ENCODE measurements at regions of chr3 and their contacts with region 1.

Region 1: DNA sequence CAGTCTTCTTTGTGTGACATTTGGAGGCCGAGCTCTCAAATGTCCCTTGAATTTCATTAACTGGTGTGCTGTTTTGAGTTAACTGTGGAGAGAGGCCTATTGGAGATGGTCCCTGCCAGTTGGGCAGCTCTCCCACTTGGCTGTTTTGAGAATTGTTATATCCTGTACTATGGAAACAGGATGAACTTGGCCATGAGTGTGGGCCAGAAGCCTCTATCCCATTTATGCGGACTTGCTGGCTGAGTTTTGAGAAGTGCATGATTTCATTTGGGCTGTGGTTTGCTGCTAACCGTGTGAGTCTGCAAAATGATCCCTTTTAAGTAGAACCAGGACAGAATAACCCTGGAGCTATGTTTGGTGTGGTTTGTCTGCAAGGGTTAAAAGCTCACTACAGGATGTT is 366.0 kb downstream of the PTPRG start:
- DNase-seq: peak in 1 of 2 donors; percentile 77
- H3K4me3 ChIP-seq: no peak overlapping the region
- H3K27ac ChIP-seq: peak overlapping the region; percentile 70 to 72
- H3K4me1 ChIP-seq: peaks cover 0 to 49% of the 10 kb centered on the region in 2 donors
- H3K27me3 ChIP-seq: no peaks in the 10 kb centered on the region
- CTCF ChIP-seq: no peak

Region 2: GRCh38 chr3:61847784-61848462 is 79.4 kb before region 1 on chr3:
- intact Hi-C with region 1: loop called (anchors 5 kb)
- DNase-seq: peak in 1 of 2 donors; percentile 83
- H3K4me3 ChIP-seq: peak overlapping the region in 1 of 2 donors; percentile 3
- H3K27ac ChIP-seq: peak overlapping the region; percentile 72 to 85
- H3K4me1 ChIP-seq: peaks cover 7 to 47% of the 10 kb centered on the region in 2 donors
- H3K27me3 ChIP-seq: no peaks in the 10 kb centered on the region
- CTCF ChIP-seq: no peak

Region 3: GRCh38 chr3:61861410-61861809 is 65.9 kb before region 1 on chr3:
- intact Hi-C with region 1: no loop called
- DNase-seq: no peak
- H3K4me3 ChIP-seq: no peak overlapping the region
- H3K27ac ChIP-seq: no peak overlapping the region
- H3K4me1 ChIP-seq: peaks cover 0 to 29% of the 10 kb centered on the region in 2 donors
- H3K27me3 ChIP-seq: no peaks in the 10 kb centered on the region
- CTCF ChIP-seq: no peak

Region 4: GRCh38 chr3:61872077-61872706 is 55.1 kb before region 1 on chr3:
- intact Hi-C with region 1: loop called (anchors 5 kb)
- DNase-seq: no peak
- H3K4me3 ChIP-seq: no peak overlapping the region
- H3K27ac ChIP-seq: peak overlapping the region; percentile 50 to 53
- H3K4me1 ChIP-seq: peaks cover 0 to 51% of the 10 kb centered on the region in 2 donors
- H3K27me3 ChIP-seq: no peaks in the 10 kb centered on the region
- CTCF ChIP-seq: no peak

Region 5: DNA sequence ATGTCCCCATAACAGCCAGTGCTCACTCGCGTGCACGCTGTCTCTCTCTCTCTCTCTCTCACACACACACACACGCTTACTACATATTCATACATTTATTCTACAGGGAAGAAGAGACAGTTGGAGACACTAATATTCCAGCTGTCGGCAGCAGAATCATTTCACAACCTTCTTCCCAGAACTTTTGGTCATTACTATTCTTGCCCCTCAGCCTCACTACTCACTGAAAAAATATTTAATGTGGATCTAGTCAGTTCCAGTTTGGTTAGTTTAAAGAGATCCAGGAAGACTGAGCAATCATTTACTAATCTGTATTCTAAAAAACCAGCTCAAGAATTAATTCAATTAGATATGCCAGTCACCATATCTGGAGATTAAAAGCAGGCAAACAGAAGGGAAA is 28.9 kb after region 1 on chr3:
- intact Hi-C with region 1: loop called (anchors 2 kb)
- DNase-seq: no peak
- H3K4me3 ChIP-seq: peak overlapping the region in 1 of 2 donors; percentile 19
- H3K27ac ChIP-seq: peak overlapping the region; percentile 20 to 60
- H3K4me1 ChIP-seq: peaks cover 0 to 27% of the 10 kb centered on the region in 2 donors
- H3K27me3 ChIP-seq: no peaks in the 10 kb centered on the region
- CTCF ChIP-seq: no peak

Region 6: GRCh38 chr3:62084597-62084996 is 157.3 kb after region 1 on chr3:
- intact Hi-C with region 1: no loop called
- DNase-seq: no peak
- H3K4me3 ChIP-seq: no peak overlapping the region
- H3K27ac ChIP-seq: no peak overlapping the region
- H3K4me1 ChIP-seq: no peaks in the 10 kb centered on the region
- H3K27me3 ChIP-seq: no peaks in the 10 kb centered on the region
- CTCF ChIP-seq: no peak

Measured in ascending aorta (tissue), 2 donors.